IMR-90 (cell line): ENCODE measurements at regions of chr22 and their contacts with region 1.

Region 1: DNA sequence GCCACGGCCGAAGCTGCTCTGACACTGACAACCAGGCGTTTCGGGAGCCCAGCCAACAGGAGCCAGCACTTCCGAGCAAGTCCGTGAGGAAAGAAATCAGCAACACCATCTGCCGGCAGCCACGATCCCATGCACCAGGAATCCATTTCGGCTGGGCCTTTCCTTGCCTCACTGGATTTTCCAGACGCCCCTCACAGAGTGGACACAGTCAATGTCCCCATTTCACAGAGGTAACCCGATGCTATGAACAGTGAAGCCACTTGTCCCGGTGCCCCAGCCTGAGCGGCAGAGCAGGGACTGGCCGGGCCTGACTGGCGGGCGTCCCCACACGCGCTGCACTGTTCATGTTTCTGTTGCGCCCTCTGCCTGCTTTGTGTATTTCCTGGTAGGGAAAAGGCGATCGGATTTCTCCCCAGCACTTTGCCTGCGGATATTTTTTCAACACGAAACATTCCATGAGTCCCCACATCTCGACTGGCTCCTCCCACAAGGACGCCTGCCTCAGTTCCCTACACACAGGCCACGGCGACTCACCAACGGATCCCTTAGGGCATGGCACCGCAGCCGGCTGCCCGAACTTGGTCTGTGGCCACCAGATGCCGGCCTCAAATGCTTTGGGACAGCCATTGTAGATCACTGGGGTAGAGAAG is 55.3 kb downstream of the TRMU start:
- DNase-seq: peak; percentile 65
- ATAC-seq: peak; percentile 90
- H3K4me3 ChIP-seq: no peak overlapping the region
- H3K27ac ChIP-seq: no peak overlapping the region
- H3K4me1 ChIP-seq: no peaks in the 10 kb centered on the region
- H3K27me3 ChIP-seq: no peaks in the 10 kb centered on the region; the same call in 1 of the 2 replicates
- CTCF ChIP-seq: peak; percentile 59
- POLR2A ChIP-seq: no peak
- RAD21 ChIP-seq: peak; percentile 53

Region 2: DNA sequence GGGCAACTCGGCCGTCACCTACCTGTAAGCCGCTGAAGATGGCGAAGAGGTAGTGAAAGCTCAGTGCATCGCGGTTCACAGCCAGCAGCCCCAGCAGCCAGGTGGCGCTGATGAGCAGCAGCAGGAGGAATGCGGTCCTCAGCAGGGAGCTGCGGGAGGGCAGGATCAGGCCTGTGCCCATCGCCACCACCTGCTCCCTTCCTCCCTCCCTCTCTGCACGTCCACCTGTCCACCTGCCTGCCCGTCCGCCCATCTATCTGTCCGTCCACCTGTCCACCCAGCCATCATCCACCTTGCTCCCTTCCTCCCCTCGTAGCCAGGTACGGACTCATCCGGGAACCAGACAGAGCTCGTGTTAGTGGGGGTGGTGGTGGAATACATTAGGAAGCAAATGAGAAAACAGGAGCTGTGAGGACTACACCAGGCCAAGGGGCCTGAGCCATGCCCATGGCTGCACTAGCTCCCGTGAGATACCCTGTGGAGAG is 23.0 kb before region 1 on chr22:
- CTCF ChIA-PET with region 1: interaction called, 10 read pairs
- POLR2A ChIA-PET with region 1: no interaction called
- dilution Hi-C with region 1: no loop called
- in situ Hi-C with region 1: no loop called
- intact Hi-C with region 1: no loop called
- DNase-seq: peak; percentile 40
- ATAC-seq: peak; percentile 93
- H3K4me3 ChIP-seq: no peak overlapping the region
- H3K27ac ChIP-seq: no peak overlapping the region
- H3K4me1 ChIP-seq: no peaks in the 10 kb centered on the region
- H3K27me3 ChIP-seq: peaks cover 13% of the 10 kb centered on the region; the same call in 1 of the 2 replicates
- CTCF ChIP-seq: peak; percentile 87
- POLR2A ChIP-seq: no peak
- RAD21 ChIP-seq: peak; percentile 77

Region 3: GRCh38 chr22:46432164-46433068 is 41.6 kb after region 1 on chr22:
- CTCF ChIA-PET with region 1: no interaction called
- POLR2A ChIA-PET with region 1: no interaction called
- dilution Hi-C with region 1: no loop called
- in situ Hi-C with region 1: no loop called
- intact Hi-C with region 1: no loop called
- DNase-seq: no peak
- ATAC-seq: no peak
- H3K4me3 ChIP-seq: no peak overlapping the region
- H3K27ac ChIP-seq: no peak overlapping the region
- H3K4me1 ChIP-seq: no peaks in the 10 kb centered on the region
- H3K27me3 ChIP-seq: peaks cover 23% of the 10 kb centered on the region
- CTCF ChIP-seq: no peak
- POLR2A ChIP-seq: no peak
- RAD21 ChIP-seq: no peak

Region 4: DNA sequence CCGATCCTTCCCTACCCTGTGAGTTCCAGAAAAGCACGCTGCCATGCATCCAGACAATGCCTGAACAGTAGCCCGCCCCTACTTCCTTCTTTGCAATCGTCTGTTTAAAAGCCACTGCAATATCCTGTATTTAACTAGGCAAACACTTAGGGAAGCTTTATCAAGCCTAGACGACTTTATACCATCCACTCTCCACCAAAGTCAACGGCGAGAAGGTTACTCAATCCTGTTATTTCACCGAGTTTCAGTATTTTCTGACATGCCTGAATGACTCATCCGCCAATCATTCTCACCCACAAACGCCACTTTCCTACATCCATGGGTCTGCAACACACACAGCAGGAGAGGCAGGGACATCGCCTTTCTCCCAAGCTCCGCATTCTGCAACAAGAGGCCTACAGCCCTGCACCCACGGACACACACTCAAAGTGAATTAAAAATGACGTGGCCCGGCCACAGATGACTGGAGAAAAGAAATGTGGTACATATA is 137.4 kb after region 1 on chr22:
- CTCF ChIA-PET with region 1: no interaction called
- POLR2A ChIA-PET with region 1: no interaction called
- dilution Hi-C with region 1: no loop called
- in situ Hi-C with region 1: no loop called
- intact Hi-C with region 1: loop called (anchors 10 kb)
- DNase-seq: peak; percentile 64
- ATAC-seq: no peak; the same call in 1 of the 2 replicates
- H3K4me3 ChIP-seq: no peak overlapping the region
- H3K27ac ChIP-seq: no peak overlapping the region
- H3K4me1 ChIP-seq: no peaks in the 10 kb centered on the region
- H3K27me3 ChIP-seq: peaks cover 17% of the 10 kb centered on the region; the same call in 1 of the 2 replicates
- CTCF ChIP-seq: no peak
- POLR2A ChIP-seq: no peak
- RAD21 ChIP-seq: no peak